ENCODE measurements at regions of chr2 and their contacts with region 1.

Region 1: DNA sequence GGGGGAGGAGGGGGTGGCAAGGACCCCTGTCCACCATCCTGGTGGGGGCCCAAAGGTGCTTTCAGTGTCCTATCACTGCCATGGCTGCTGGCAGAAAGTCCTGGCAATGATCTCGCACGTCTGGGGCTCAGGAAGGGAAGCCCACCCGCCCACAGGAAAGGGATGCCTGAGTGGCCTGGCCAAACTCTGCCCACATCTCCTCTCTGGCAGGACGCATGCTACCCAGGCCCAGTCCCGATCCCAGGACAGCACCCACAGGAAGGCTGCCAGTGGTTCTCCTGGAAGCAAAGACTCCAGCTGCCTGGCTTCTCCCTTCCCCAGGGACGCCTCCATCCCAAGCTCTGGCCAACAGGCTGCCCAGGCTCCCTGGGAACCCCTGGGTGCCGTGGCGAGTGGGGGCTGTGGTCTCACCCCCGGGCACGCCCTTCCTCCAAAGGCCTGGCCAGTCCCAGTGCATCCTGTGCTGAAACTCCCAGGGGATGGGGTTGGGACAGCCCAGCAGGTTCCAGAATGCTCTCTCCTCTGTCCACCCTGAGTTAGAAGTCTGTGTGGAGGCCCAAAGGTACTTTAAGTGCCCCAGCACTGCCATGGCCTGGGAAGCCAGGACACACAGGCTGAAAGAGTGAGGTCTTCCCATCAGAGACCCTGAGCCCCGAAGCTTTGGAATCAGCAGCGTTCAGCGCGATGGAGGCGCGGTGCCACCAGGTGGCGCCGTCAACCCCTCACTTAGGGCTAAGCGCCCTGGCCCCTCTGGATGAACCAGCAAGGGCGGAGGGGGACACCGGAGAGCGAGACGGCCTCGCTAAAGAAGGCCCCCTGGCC is 29.8 kb upstream of the TAF1B start:
- DNase-seq: peak; percentile 64 to 86
- ATAC-seq: peak; percentile 86 to 96
- H3K4me3 ChIP-seq: 0 out of 3 replicates have a peak overlapping the region, but pooled peaks have one; percentile 17
- H3K27ac ChIP-seq: peak overlapping the region; percentile 36 to 43; a peak in 5 of 6 replicates
- H3K4me1 ChIP-seq: peaks cover 7% of the 10 kb centered on the region; the same call in 2 of the 3 replicates
- CTCF ChIP-seq: peak; percentile 98
- EP300 ChIP-seq: no peak
- POLR2A ChIP-seq: no peak
- RAD21 ChIP-seq: peak; percentile 90 to 93

Region 2: GRCh38 chr2:9539531-9539930 is 274.0 kb before region 1 on chr2:
- CTCF ChIA-PET with region 1: no interaction called
- POLR2A ChIA-PET with region 1: no interaction called
- DNase-seq: no peak
- ATAC-seq: no peak
- H3K4me3 ChIP-seq: no peak overlapping the region
- H3K27ac ChIP-seq: no peak overlapping the region; a peak in 1 of 6 replicates
- H3K4me1 ChIP-seq: peaks cover 53% of the 10 kb centered on the region
- CTCF ChIP-seq: no peak
- EP300 ChIP-seq: no peak
- POLR2A ChIP-seq: no peak
- RAD21 ChIP-seq: no peak

Region 3: GRCh38 chr2:9789371-9789968 is 24.1 kb before region 1 on chr2:
- CTCF ChIA-PET with region 1: interaction called, 262 read pairs
- POLR2A ChIA-PET with region 1: no interaction called
- DNase-seq: no peak
- ATAC-seq: no peak
- H3K4me3 ChIP-seq: no peak overlapping the region
- H3K27ac ChIP-seq: no peak overlapping the region
- H3K4me1 ChIP-seq: no peaks in the 10 kb centered on the region
- CTCF ChIP-seq: no peak
- EP300 ChIP-seq: no peak
- POLR2A ChIP-seq: no peak
- RAD21 ChIP-seq: no peak

Region 4: DNA sequence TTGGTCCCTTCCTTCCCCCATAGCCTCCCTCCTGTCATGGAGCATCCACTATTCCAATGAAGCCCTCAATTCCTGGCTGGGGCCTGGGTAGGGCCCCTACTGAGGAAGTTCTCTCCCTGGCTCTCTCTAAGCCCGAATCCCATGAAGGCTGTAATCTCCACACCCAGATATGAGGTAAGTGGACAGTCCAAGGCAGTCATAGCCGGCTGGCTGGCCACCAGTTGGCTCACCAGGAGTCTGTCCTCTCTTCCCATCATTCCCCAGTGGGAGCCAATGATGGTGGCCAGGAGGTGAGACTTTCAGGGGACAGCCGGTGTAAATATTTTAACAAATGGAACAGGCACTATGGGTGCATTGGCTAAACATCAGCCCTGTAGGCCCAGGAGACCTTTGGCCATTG is 23.0 kb after region 1 on chr2:
- CTCF ChIA-PET with region 1: interaction called, 42 read pairs
- POLR2A ChIA-PET with region 1: no interaction called
- DNase-seq: no peak
- ATAC-seq: 0 out of 6 replicates have a peak, but pooled peaks of 1 of the 2 experiments have one; percentile 27
- H3K4me3 ChIP-seq: no peak overlapping the region
- H3K27ac ChIP-seq: no peak overlapping the region
- H3K4me1 ChIP-seq: no peaks in the 10 kb centered on the region
- CTCF ChIP-seq: no peak
- EP300 ChIP-seq: no peak
- POLR2A ChIP-seq: no peak
- RAD21 ChIP-seq: no peak

Region 5: DNA sequence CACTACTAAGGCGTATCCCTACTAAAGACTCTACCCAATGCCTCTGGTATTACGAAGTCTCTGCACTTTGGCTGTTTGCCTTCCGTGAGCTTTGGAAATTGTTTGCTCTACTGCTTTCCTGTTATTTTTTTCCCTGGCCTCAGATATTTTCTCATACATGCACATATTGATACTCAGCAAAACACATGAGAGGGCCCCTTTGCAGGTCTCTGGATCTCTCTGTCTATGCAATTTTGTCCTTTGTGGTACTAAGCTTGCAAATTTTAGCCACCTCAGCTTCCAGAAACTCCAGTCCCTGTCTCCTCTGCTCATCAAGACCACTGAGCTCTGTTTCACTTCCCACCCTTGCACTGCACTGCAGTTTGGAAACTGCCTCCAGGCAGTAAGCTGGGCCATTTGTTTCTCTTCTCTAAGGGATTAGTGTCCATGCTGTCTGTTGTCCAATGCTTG is 76.3 kb after region 1 on chr2:
- CTCF ChIA-PET with region 1: interaction called, 11 read pairs
- POLR2A ChIA-PET with region 1: no interaction called
- DNase-seq: no peak
- ATAC-seq: no peak
- H3K4me3 ChIP-seq: no peak overlapping the region
- H3K27ac ChIP-seq: no peak overlapping the region
- H3K4me1 ChIP-seq: no peaks in the 10 kb centered on the region
- CTCF ChIP-seq: no peak
- EP300 ChIP-seq: no peak
- POLR2A ChIP-seq: no peak
- RAD21 ChIP-seq: no peak

Region 6: GRCh38 chr2:9975805-9976447 is 162.4 kb after region 1 on chr2:
- CTCF ChIA-PET with region 1: interaction called, 15 read pairs
- POLR2A ChIA-PET with region 1: interaction called, 3 read pairs
- DNase-seq: peak; percentile 89 to 98
- ATAC-seq: peak; percentile 92 to 93
- H3K4me3 ChIP-seq: no peak overlapping the region
- H3K27ac ChIP-seq: peak overlapping the region in 1 of 2 experiments; percentile 48; a peak in 2 of 6 replicates
- H3K4me1 ChIP-seq: peaks cover 25% of the 10 kb centered on the region
- CTCF ChIP-seq: no peak
- EP300 ChIP-seq: no peak; a peak in 1 of 5 replicates
- POLR2A ChIP-seq: no peak
- RAD21 ChIP-seq: no peak

Region 7: DNA sequence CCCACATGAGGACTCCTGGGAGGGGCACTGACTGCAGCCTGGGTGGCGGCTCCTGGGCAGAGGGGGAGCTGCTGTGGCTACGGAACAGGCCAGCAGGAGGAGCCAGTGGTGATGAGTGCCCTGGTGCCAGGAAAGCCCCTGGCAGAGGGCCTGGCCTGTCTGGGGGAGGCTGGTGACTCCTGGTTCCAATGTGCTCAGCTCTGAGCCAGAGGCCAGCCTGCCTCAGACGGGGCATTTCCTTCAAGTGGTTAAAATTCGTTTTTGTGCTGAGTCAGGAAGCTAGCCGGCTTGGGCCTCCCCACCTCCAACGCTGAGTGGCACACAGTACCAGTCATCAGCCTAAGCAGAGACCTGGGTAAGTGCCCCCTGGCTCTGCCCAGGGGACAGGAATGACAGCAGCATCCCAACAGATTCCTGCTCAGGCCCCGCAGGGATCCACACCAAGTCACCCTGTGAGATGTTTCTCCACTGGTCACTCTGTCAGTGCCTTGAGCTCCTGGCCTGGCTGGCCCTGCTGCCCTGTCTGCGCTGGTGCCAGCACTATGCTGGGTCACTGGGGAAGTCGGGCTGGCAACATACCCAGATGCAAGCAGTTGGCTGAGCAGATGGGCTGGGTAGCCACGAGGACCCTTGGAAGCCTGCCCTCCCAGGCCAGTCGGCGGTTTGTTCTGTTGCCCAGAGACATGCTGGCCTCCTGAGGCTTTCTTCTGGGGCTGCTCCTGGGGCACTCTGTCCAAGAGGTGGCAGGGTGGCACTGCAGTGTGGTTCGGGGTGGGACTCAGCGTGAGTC is 222.8 kb after region 1 on chr2:
- CTCF ChIA-PET with region 1: interaction called, 24 read pairs
- POLR2A ChIA-PET with region 1: no interaction called
- DNase-seq: peak; percentile 84 to 95
- ATAC-seq: peak; percentile 88 to 94
- H3K4me3 ChIP-seq: no peak overlapping the region
- H3K27ac ChIP-seq: peak overlapping the region; percentile 53 to 83
- H3K4me1 ChIP-seq: peaks cover 16% of the 10 kb centered on the region
- CTCF ChIP-seq: peak; percentile 62
- EP300 ChIP-seq: no peak
- POLR2A ChIP-seq: no peak
- RAD21 ChIP-seq: peak; percentile 43; a peak in 3 of 5 replicates

Region 8: DNA sequence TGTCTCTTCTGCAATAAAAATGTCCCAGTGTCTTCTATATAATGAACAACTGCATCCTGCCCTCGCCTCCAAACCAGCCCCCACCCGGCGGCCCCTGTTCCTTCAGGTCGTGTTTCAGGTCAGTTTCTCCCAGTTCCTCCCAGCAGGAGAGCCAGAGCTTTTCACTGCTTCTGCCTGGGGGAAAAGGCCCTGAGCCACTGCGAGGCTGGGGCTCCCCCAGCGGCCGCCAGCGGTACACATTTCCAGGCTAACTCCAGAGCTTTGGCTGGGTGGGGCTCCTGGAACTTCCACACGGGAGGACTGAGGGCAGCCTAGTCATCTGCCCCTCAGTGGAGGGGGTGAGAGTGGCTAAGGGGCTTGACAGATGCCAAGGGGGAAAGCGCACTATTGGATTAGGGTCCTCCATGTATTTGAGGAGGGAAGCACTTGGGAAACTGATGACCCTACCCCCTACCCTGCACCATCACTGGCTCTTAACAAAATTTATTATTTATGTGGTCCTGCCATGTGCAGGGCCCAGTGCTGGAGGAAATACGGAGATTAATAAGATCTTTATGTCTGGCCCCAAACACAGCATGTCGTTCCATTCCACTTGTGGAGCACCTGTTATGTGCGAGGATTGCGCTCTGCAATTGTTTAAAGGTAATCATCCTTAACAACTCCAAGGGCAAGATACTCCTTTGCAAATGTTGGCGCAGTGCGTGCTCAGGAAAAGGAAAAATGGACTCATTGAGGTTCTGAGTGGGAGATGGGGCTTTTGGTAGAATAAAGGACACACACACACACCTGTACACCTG is 284.0 kb after region 1 on chr2:
- CTCF ChIA-PET with region 1: interaction called, 15 read pairs
- POLR2A ChIA-PET with region 1: no interaction called
- DNase-seq: peak; percentile 70 to 97
- ATAC-seq: peak; percentile 97 to 99
- H3K4me3 ChIP-seq: no peak overlapping the region
- H3K27ac ChIP-seq: no peak overlapping the region
- H3K4me1 ChIP-seq: peaks cover 5% of the 10 kb centered on the region
- CTCF ChIP-seq: peak; percentile 88
- EP300 ChIP-seq: no peak
- POLR2A ChIP-seq: no peak
- RAD21 ChIP-seq: peak; percentile 81 to 86

Measured in A549 (cell line).